CD8-positive, alpha-beta memory T cell (primary cell): ENCODE measurements at regions of chr6 and their contacts with region 1.

Region 1: GRCh38 chr6:32984605-32985389 is 16.4 kb downstream of the BRD2 start:
- DNase-seq: peak; percentile 77 to 93 (median 83)
- H3K4me3 ChIP-seq: no peak overlapping the region
- H3K4me3 Mint-ChIP-seq: no peak overlapping the region
- H3K27ac ChIP-seq: no peak overlapping the region
- H3K27ac Mint-ChIP-seq: peak overlapping the region; percentile 15 to 90 (median 46)
- H3K4me1 ChIP-seq: peaks cover 11% of the 10 kb centered on the region
- H3K4me1 Mint-ChIP-seq: peaks cover 11 to 35% (median 29%) of the 10 kb centered on the region in 3 donors
- H3K27me3 ChIP-seq: no peaks in the 10 kb centered on the region
- H3K27me3 Mint-ChIP-seq: no peaks in the 10 kb centered on the region

Region 2: DNA sequence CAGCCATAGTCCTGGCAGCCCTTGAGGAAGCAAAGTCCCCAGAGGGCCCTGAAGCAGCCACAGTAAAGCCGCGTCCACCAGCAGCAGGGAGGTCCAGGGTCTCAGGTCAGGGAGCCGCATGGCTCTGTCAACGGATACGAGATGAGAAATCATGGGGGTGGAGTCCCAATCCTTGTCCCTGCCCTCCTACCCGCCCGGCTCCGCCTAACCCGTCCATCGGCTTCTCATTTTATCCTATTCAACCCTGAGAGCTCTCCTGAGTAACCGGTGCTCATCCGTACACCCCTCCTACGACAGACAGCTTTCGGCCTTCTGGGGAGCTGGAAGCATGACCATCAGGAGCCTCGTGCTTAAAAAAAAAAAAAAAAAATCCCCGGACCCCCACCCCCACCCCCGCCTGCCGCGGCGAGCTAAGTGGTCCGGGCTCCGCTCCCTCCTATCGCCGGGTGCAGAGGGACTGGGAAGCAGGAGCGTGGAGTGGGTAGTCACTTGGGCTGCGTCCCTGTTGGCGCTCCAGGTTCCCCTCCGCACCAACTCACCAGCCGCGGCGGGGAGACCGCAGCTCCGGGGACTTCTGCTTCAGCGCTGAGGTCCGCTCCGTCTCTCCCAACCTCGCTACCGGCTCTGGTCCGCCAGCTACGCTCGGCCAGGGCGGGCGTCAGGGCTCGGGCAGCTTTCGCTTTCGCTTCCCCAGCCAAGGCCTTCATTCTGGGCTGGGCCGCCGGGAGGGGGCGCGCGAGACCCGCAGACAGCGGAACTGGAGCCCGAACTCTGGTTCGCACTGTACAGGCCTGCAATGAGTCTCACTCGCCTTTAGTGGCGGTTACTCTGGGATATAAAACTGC is 146.5 kb before region 1 on chr6 and contains the start of gene TAP2:
- CTCF ChIA-PET with region 1: interaction called, 13 read pairs
- POLR2A ChIA-PET with region 1: no interaction called
- DNase-seq: peak; percentile 94 to 98 (median 97)
- H3K4me3 ChIP-seq: peak within 1 kb of the TSS; percentile 75
- H3K4me3 Mint-ChIP-seq: peak within 1 kb of the TSS; percentile 91 to 97 (median 96)
- H3K27ac ChIP-seq: peak within 1 kb of the TSS; percentile 77
- H3K27ac Mint-ChIP-seq: peak within 1 kb of the TSS; percentile 91 to 100 (median 100)
- H3K4me1 ChIP-seq: peaks cover 78% of the 10 kb centered on the region
- H3K4me1 Mint-ChIP-seq: peaks cover 84 to 91% (median 88%) of the 10 kb centered on the region in 3 donors
- H3K27me3 ChIP-seq: no peaks in the 10 kb centered on the region
- H3K27me3 Mint-ChIP-seq: peaks cover 0 to 2% of the 10 kb centered on the region in 2 donors
- total RNA-seq, gene TAP2: 221 to 228 TPM

Region 3: DNA sequence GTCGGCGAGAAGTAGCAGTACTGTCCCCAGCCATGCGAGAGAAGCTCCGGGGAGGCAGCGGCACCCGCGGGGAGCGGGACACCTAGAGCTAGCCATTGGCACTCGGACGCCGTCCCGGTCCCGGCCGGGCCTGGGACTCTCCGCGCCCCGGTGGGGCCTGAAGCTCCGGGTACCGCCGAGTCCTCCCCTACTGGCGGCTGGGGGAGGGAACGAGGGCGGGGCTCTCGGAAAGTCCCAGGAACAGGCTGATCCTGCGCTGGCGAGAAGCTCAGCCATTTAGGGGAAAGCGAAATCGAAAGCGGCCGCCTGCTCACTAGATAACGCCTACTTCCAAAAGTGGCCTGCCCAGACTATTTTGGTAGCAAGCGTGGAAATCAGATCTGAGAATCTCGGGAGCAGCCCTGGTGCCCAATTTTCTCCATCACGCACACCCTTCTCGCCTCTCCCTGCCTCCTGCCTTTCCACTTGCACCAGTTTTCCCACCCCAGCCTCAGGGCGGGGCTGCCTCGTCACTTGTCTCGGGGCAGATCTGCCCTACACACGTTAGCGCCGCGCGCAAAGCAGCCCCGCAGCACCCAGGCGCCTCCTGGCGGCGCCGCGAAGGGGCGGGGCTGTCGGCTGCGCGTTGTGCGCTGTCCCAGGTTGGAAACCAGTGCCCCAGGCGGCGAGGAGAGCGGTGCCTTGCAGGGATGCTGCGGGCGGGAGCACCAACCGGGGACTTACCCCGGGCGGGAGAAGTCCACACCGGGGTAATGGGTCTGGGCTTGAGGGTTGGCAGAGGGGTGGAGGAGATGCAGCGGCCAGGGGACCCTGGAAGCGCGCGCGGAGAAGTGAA is 131.0 kb before region 1 on chr6 and contains the starts of genes PSMB9 and TAP1:
- CTCF ChIA-PET with region 1: interaction called, 10 read pairs
- POLR2A ChIA-PET with region 1: interaction called, 3 read pairs
- DNase-seq: peak; percentile 93 to 97 (median 94)
- H3K4me3 ChIP-seq: peak within 1 kb of the TSS; percentile 90
- H3K4me3 Mint-ChIP-seq: peak within 1 kb of the TSS; percentile 95 to 100 (median 99)
- H3K27ac ChIP-seq: peak within 1 kb of the TSS; percentile 97
- H3K27ac Mint-ChIP-seq: peak within 1 kb of the TSS; percentile 99 to 100 (median 100)
- H3K4me1 ChIP-seq: peaks cover 68% of the 10 kb centered on the region
- H3K4me1 Mint-ChIP-seq: peaks cover 71 to 79% (median 77%) of the 10 kb centered on the region in 3 donors
- H3K27me3 ChIP-seq: no peaks in the 10 kb centered on the region
- H3K27me3 Mint-ChIP-seq: no peaks in the 10 kb centered on the region
- total RNA-seq, gene PSMB9: 245 to 255 TPM
- total RNA-seq, gene TAP1: 394 to 407 TPM

Region 4: DNA sequence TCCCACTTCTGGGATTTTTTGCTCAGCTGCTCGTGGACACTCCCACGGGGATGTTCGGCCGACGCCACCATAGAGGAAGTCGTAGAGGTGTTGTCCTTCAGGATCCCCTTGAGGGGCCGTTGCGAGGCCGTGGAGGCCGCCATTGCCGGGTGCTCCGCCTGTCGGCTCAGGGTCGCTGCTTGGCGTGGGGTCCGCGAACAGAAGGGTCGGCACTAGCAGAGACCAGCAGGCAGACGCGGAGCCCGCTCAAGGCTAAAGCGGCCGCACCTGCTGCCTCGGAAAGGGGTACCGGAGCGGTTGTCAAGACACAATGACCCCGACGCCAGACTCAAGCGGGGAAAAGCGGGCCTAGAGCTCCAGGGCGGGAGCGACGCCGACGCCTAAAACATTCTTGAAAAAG is 105.1 kb before region 1 on chr6:
- CTCF ChIA-PET with region 1: interaction called, 64 read pairs
- POLR2A ChIA-PET with region 1: no interaction called
- DNase-seq: no peak
- H3K4me3 ChIP-seq: no peak overlapping the region
- H3K4me3 Mint-ChIP-seq: no peak overlapping the region
- H3K27ac ChIP-seq: no peak overlapping the region
- H3K27ac Mint-ChIP-seq: peak overlapping the region in 1 of 8 donors; percentile 74
- H3K4me1 ChIP-seq: no peaks in the 10 kb centered on the region
- H3K4me1 Mint-ChIP-seq: no peaks in the 10 kb centered on the region
- H3K27me3 ChIP-seq: no peaks in the 10 kb centered on the region
- H3K27me3 Mint-ChIP-seq: peaks cover 0 to 8% of the 10 kb centered on the region in 2 donors

Region 5: DNA sequence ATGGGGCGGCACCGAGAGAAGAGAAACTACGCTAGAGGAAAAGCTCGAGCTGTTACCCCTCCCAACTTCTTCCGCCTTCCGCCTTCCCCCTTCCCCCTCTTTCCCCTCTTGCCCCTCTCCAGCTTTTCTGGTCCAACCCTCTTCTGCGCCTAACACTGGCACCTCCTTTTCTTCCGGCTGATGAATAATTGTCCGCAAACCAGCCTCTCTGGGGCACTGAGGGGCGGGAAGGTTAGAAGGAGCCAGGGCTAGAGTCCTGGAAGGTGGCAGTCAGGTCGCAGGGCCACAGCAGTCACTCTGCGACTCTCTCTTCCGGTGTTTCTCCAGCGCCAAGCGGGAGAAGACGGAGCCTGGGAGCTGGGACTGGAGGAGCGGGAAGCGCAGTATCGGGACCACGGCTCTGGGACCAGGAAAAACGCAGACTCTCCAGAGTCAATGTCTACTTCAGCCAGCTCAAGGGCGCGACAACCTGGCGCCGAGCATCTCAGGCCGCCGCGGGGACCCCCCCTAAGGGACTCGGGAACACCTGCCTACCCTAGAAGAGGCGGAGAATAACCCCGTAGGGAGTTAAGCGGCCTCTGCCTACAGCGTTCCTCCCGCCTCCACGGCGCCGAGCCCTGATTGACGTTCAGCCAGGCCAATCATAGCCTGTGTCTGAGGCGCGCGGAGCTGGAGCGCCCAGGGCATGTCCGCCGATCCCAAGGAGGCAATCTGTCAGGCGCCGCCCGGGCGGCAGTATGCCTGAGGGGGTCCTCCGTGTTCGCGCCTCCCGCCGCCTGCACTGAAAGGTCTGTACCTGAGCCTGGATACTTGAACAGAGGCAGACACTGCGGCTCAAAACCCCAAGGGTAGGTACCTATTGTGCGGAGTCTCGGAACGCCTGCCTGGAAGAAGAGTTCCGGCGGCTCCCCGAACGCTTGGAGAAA is 90.5 kb before region 1 on chr6:
- CTCF ChIA-PET with region 1: interaction called, 26 read pairs
- POLR2A ChIA-PET with region 1: interaction called, 7 read pairs
- DNase-seq: peak; percentile 92 to 96 (median 93)
- H3K4me3 ChIP-seq: peak overlapping the region; percentile 94
- H3K4me3 Mint-ChIP-seq: peak overlapping the region; percentile 97 to 100 (median 99)
- H3K27ac ChIP-seq: peak overlapping the region; percentile 73
- H3K27ac Mint-ChIP-seq: peak overlapping the region; percentile 85 to 98 (median 96)
- H3K4me1 ChIP-seq: peaks cover 29% of the 10 kb centered on the region
- H3K4me1 Mint-ChIP-seq: peaks cover 29 to 46% (median 35%) of the 10 kb centered on the region in 3 donors
- H3K27me3 ChIP-seq: no peaks in the 10 kb centered on the region
- H3K27me3 Mint-ChIP-seq: peaks cover 0 to 1% of the 10 kb centered on the region in 2 donors

Region 6: DNA sequence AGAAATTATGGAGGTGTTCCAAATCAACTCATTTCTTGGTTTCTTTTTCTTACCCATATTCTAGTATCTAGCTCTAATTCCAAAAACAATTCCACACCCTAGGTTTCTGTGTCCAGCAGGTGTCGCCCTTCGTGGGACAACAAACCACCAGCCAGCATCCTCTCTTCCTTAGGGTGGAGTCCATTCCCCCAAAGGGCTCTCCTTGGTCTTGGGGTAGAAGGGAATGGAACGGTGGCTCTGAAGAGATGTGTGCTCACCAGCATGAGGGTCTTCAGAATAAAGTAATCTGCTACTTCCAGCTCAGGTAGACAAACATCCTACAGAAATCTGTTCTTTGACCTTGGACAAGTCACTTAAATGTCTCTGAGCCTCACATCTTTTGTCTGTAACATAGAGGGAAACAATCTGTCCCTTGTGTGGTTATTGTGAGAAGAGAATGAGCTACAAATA is 51.1 kb before region 1 on chr6:
- CTCF ChIA-PET with region 1: interaction called, 162 read pairs
- POLR2A ChIA-PET with region 1: interaction called, 13 read pairs
- DNase-seq: peak; percentile 60 to 84 (median 68)
- H3K4me3 ChIP-seq: no peak overlapping the region
- H3K4me3 Mint-ChIP-seq: no peak overlapping the region
- H3K27ac ChIP-seq: no peak overlapping the region
- H3K27ac Mint-ChIP-seq: peak overlapping the region in 1 of 8 donors; percentile 24
- H3K4me1 ChIP-seq: no peaks in the 10 kb centered on the region
- H3K4me1 Mint-ChIP-seq: peaks cover 6 to 10% (median 7%) of the 10 kb centered on the region in 3 donors
- H3K27me3 ChIP-seq: no peaks in the 10 kb centered on the region
- H3K27me3 Mint-ChIP-seq: peaks cover 0 to 2% of the 10 kb centered on the region in 2 donors

Region 7: GRCh38 chr6:32952817-32953739 is 31.7 kb before region 1 on chr6 and contains the start of gene HLA-DMA:
- CTCF ChIA-PET with region 1: interaction called, 161 read pairs
- POLR2A ChIA-PET with region 1: interaction called, 3 read pairs
- DNase-seq: peak; percentile 55 to 84 (median 76)
- H3K4me3 ChIP-seq: peak within 1 kb of the TSS; percentile 62
- H3K4me3 Mint-ChIP-seq: peak within 1 kb of the TSS; percentile 79 to 93 (median 85)
- H3K27ac ChIP-seq: no peak within 1 kb of the TSS
- H3K27ac Mint-ChIP-seq: peak within 1 kb of the TSS; percentile 77 to 97 (median 90)
- H3K4me1 ChIP-seq: peaks cover 23% of the 10 kb centered on the region
- H3K4me1 Mint-ChIP-seq: peaks cover 42 to 83% (median 55%) of the 10 kb centered on the region in 3 donors
- H3K27me3 ChIP-seq: no peaks in the 10 kb centered on the region
- H3K27me3 Mint-ChIP-seq: no peaks in the 10 kb centered on the region
- total RNA-seq, gene HLA-DMA: 14.0 to 16.5 TPM

Region 8: GRCh38 chr6:33061987-33062386 is 77.2 kb after region 1 on chr6:
- CTCF ChIA-PET with region 1: no interaction called
- POLR2A ChIA-PET with region 1: no interaction called
- DNase-seq: no peak
- H3K4me3 ChIP-seq: no peak overlapping the region
- H3K4me3 Mint-ChIP-seq: no peak overlapping the region
- H3K27ac ChIP-seq: no peak overlapping the region
- H3K27ac Mint-ChIP-seq: no peak overlapping the region
- H3K4me1 ChIP-seq: no peaks in the 10 kb centered on the region
- H3K4me1 Mint-ChIP-seq: peaks cover 0 to 8% (median 4%) of the 10 kb centered on the region in 3 donors
- H3K27me3 ChIP-seq: no peaks in the 10 kb centered on the region
- H3K27me3 Mint-ChIP-seq: peaks cover 2 to 7% of the 10 kb centered on the region in 2 donors